ENCODE measurements at regions of chr15 and their contacts with region 1.

Region 1: DNA sequence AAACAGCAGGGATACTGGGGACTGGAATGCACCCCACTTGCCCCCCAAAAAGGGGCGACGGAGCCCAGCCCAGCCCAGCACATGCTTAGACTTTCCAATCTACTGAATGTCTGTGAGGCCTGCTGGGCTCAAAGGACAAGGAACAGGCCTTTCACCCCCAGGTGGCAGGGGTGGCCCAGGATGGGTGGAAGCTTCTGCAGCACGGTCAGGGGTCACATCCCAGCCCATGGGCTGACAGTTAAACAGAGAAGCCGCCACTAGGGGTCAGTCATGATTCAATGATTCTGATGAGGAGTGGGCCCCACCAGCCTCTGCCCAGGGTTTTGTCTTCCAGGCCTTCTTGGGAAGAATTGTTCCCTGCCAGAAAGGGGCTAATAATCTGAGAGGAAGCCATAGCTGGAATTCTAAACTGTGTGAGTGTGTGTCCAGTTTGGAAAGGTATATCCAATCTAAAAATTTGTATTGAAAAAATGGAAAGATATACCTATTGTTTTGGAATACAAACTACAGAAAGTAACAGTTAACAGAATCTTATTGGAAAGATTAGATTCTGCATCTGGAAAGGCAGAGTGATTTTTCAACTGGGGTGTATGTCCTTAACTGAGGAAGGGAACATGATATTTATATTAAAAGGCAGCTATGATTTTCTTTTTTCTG is 2.2 kb downstream of the CHRNB4 start:
- DNase-seq: peak; percentile 90
- H3K4me3 ChIP-seq: peak overlapping the region in 1 of 2 experiments; percentile 40; a peak in 1 of 4 replicates
- H3K27ac ChIP-seq: peak overlapping the region in 1 of 2 experiments; percentile 98; a peak in 2 of 4 replicates
- H3K4me1 ChIP-seq: peaks cover 0 to 50% of the 10 kb centered on the region in 2 experiments; a peak in 2 of 4 replicates
- H3K27me3 ChIP-seq: peaks cover 16% of the 10 kb centered on the region
- CTCF ChIP-seq: peak; percentile 78
- EP300 ChIP-seq: peak in 1 of 2 experiments; percentile 44; a peak in 1 of 4 replicates
- RAD21 ChIP-seq: peak; percentile 92

Region 2: GRCh38 chr15:78625606-78626280 is 13.0 kb before region 1 on chr15:
- CTCF ChIA-PET with region 1: interaction called, 57 read pairs
- POLR2A ChIA-PET with region 1: interaction called, 41 read pairs
- DNase-seq: peak; percentile 66
- H3K4me3 ChIP-seq: no peak overlapping the region
- H3K27ac ChIP-seq: peak overlapping the region in 1 of 2 experiments; percentile 90; a peak in 2 of 4 replicates
- H3K4me1 ChIP-seq: peaks cover 0 to 36% of the 10 kb centered on the region in 2 experiments; a peak in 1 of 4 replicates
- H3K27me3 ChIP-seq: peaks cover 52% of the 10 kb centered on the region
- CTCF ChIP-seq: no peak
- EP300 ChIP-seq: peak in 1 of 2 experiments; percentile 30; a peak in 1 of 4 replicates
- RAD21 ChIP-seq: no peak

Region 3: DNA sequence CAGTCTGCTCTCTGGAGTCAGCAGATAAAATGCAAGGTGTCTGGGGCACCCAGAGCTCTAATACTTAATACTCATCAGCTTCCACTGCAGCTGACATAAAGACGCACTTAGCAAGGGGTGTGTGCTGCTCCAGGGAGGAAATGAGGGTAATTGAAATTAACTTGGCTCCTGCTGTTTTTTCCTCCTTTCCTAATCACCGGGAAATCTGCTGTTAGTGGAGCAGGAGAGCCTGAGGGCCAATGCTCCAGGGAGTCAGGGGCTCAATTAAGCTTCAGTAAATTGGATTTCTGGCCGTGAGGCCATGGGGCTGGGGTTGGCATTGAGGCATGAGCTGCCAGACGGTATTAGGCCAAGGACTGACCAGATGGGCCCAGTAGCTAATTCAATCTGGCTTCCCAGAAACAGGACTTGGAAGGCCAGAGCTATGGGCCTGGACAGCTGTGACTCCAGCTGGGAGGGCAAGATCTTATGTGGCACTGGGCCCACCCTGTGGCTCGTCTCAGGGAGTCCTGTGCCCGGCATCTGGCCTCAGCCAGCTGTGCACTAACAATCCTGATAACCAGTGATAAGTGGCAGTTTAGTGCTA is 32.9 kb after region 1 on chr15:
- CTCF ChIA-PET with region 1: interaction called, 104 read pairs
- POLR2A ChIA-PET with region 1: interaction called, 191 read pairs
- DNase-seq: peak; percentile 88
- H3K4me3 ChIP-seq: no peak overlapping the region
- H3K27ac ChIP-seq: peak overlapping the region in 1 of 2 experiments; percentile 99; a peak in 2 of 4 replicates
- H3K4me1 ChIP-seq: peaks cover 0 to 65% of the 10 kb centered on the region in 2 experiments; a peak in 2 of 4 replicates
- H3K27me3 ChIP-seq: no peaks in the 10 kb centered on the region
- CTCF ChIP-seq: no peak
- EP300 ChIP-seq: peak; percentile 54 to 100; a peak in 3 of 4 replicates
- RAD21 ChIP-seq: peak; percentile 35

Region 4: GRCh38 chr15:78691167-78691872 is 52.5 kb after region 1 on chr15:
- CTCF ChIA-PET with region 1: interaction called, 14 read pairs
- POLR2A ChIA-PET with region 1: interaction called, 11 read pairs
- DNase-seq: no peak
- H3K4me3 ChIP-seq: no peak overlapping the region
- H3K27ac ChIP-seq: peak overlapping the region in 1 of 2 experiments; percentile 76; a peak in 2 of 4 replicates
- H3K4me1 ChIP-seq: peaks cover 0 to 34% of the 10 kb centered on the region in 2 experiments; a peak in 1 of 4 replicates
- H3K27me3 ChIP-seq: peaks cover 6% of the 10 kb centered on the region; the same call in 1 of the 2 replicates
- CTCF ChIP-seq: no peak
- EP300 ChIP-seq: no peak
- RAD21 ChIP-seq: no peak

Region 5: DNA sequence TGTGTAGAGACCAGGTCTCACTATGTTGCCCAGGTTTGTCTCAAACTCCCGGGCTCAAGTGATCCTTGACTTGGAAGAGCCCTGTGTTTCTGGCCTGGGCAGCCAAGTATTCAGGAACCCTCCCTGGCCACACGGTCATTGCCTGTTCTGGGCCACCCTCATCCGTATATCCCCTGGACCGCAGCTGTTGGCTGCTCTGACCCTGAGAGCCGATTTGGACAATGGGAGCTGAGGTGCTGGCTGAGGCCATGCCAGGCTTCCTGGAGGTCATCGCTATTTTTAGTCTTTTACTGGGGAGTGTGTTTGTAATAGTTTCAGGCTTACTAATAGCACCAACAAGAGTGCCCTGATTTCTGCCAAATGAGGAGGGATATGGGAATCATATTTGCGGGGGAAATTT is 111.8 kb after region 1 on chr15:
- CTCF ChIA-PET with region 1: interaction called, 47 read pairs
- POLR2A ChIA-PET with region 1: interaction called, 10 read pairs
- DNase-seq: no peak
- H3K4me3 ChIP-seq: no peak overlapping the region
- H3K27ac ChIP-seq: peak overlapping the region in 1 of 2 experiments; percentile 45; a peak in 1 of 4 replicates
- H3K4me1 ChIP-seq: peaks cover 0 to 49% of the 10 kb centered on the region in 2 experiments; a peak in 2 of 4 replicates
- H3K27me3 ChIP-seq: no peaks in the 10 kb centered on the region
- CTCF ChIP-seq: no peak
- EP300 ChIP-seq: no peak
- RAD21 ChIP-seq: no peak

Measured in SK-N-SH (cell line).